ENCODE measurements at regions of chr14 and their contacts with region 1.

Region 1: GRCh38 chr14:64438181-64438841 is 27.0 kb upstream of the AKAP5 start:
- DNase-seq: no peak
- ATAC-seq: no peak
- H3K4me3 ChIP-seq: no peak overlapping the region
- H3K27ac ChIP-seq: no peak overlapping the region
- H3K4me1 ChIP-seq: peaks cover 0 to 14% (median 10%) of the 10 kb centered on the region in 9 donors
- H3K27me3 ChIP-seq: no peaks in the 10 kb centered on the region
- CTCF ChIP-seq: no peak

Region 2: DNA sequence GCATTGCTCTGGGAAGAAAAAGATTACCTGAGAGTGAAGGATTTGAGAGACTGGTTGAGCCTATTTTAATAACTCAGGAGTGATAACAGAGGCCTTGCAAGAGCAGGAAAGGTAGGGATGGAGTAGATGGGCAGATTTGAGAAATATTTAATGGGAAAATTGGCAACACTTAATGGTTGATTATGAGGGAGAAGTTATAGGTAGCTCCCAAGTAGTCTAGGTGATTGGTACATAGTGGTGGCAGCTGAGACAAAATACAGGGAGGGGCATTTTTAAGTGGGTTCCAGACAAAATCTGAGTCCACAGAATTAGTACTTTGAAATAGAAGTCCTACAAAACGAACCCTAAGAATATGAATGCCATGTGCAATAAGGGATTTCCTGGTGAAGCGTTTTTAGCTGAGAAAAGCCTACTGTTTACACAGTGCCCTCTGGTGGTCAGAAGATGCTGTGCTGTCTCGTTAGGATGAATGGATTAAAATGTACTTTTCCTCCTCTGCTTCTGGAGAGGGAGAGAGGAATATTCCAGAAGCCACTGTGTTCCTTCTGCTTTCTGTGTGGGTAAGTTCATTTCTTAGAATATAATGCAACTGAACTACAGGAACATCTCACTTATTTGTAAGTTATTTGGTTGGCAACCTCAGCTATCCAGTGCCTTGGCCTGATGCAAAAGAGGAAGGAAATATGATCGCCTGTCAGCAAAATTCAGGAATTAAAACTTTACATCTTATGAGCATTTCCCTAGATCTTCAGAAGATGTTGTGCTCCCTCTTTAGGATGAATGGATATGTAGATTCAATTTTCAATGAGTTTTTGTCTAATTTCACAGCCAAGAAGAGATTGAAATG is 72.7 kb after region 1 on chr14:
- intact Hi-C with region 1: loop called in 1 of 10 experiments (anchors 5 kb)
- DNase-seq: peak in 1 of 2 donors; percentile 69
- ATAC-seq: peak in 7 of 8 donors; percentile 36 to 80 (median 71)
- H3K4me3 ChIP-seq: no peak overlapping the region
- H3K27ac ChIP-seq: peak overlapping the region in 6 of 10 donors; percentile 1 to 57 (median 18)
- H3K4me1 ChIP-seq: peaks cover 9 to 93% (median 77%) of the 10 kb centered on the region in 9 donors
- H3K27me3 ChIP-seq: no peaks in the 10 kb centered on the region
- CTCF ChIP-seq: peak; percentile 73 to 92 (median 90)